Activated CD4-positive, alpha-beta T cell treated with anti-CD3 and anti-CD28 coated beads for 36 hours (primary cell): ENCODE measurements at regions of chr11 and their contacts with region 1.

Region 1: DNA sequence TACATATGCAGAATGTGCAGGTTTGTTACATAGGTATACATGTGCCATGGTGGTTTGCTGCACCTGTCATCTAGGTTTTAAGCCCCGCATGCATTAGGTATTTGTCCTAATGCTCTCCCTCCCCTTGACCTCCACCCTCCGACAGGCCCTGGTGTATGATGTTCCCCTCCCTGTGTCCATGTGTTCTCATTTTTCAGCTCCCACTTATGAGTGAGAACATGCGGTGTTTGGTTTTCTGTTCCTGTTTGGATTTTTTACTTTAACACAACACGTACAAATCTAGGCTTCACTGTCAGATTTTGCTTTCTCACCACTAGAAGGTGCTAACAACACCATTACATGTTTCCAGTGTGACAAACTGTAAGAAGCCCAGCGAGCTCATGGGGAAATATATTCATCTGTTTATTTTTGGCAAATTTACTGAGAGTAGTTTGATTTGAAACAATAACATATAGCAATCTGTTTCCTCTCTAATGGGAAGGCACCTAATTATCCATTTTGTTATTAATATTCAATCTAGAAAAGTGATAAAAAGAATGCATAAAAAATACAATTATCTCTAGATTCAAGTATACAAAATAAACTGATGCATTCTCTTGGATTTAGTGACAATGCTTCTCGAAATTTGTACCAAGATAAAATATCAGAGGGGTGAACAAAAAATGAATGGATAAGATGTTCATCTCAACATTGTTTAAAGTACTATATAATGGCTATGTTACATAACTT is 23.2 kb upstream of the BIRC3 start:
- DNase-seq: no peak
- ATAC-seq: peak; percentile 95
- H3K4me3 Mint-ChIP-seq: peak overlapping the region; percentile 68
- H3K27ac Mint-ChIP-seq: peak overlapping the region; percentile 95
- H3K4me1 Mint-ChIP-seq: peaks cover 27% of the 10 kb centered on the region
- H3K27me3 Mint-ChIP-seq: no peaks in the 10 kb centered on the region

Region 2: GRCh38 chr11:102279641-102280170 is 14.3 kb before region 1 on chr11:
- CTCF ChIA-PET with region 1: interaction called, 19 read pairs
- POLR2A ChIA-PET with region 1: no interaction called
- intact Hi-C with region 1: no loop called
- DNase-seq: peak; percentile 59
- ATAC-seq: peak; percentile 96
- H3K4me3 Mint-ChIP-seq: peak overlapping the region; percentile 27
- H3K27ac Mint-ChIP-seq: peak overlapping the region; percentile 27
- H3K4me1 Mint-ChIP-seq: peaks cover 16% of the 10 kb centered on the region
- H3K27me3 Mint-ChIP-seq: peaks cover 8% of the 10 kb centered on the region

Region 3: DNA sequence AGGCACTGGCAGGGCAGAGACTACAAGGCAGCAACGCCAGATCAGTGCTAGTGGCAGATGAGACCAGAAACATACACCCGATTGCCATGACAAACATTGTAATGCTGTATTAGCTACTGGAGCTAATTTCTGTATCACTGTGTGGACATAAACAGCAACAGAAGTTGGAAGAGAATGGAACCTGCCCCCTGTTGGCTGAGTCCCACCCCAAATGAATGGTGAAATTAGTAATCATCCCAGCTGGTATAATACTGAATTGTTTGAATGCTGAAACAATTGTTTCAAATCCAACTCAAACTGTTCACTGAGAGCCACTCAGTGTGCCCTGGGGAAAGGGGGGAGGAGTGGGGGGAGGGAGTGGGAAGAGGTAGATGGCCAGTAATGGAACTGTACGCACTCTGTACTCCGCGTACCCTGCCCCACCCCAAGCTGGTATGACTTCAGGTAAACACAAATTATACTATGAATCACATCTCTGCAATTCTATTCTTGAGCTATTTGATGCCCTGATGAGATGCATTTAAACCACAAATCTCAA is 12.1 kb after region 1 on chr11:
- CTCF ChIA-PET with region 1: interaction called, 222 read pairs
- POLR2A ChIA-PET with region 1: no interaction called
- intact Hi-C with region 1: no loop called
- DNase-seq: no peak
- ATAC-seq: peak; percentile 48
- H3K4me3 Mint-ChIP-seq: peak overlapping the region; percentile 54
- H3K27ac Mint-ChIP-seq: peak overlapping the region; percentile 86
- H3K4me1 Mint-ChIP-seq: peaks cover 55% of the 10 kb centered on the region
- H3K27me3 Mint-ChIP-seq: no peaks in the 10 kb centered on the region

Region 4: GRCh38 chr11:102317099-102317767 is 23.2 kb after region 1 on chr11 and contains the start of gene BIRC3:
- CTCF ChIA-PET with region 1: interaction called, 222 read pairs
- POLR2A ChIA-PET with region 1: interaction called, 3 read pairs
- intact Hi-C with region 1: loop called (anchors 1 kb)
- DNase-seq: peak; percentile 95
- ATAC-seq: peak; percentile 85
- H3K4me3 Mint-ChIP-seq: peak within 1 kb of the TSS; percentile 96
- H3K27ac Mint-ChIP-seq: peak within 1 kb of the TSS; percentile 99
- H3K4me1 Mint-ChIP-seq: peaks cover 68% of the 10 kb centered on the region
- H3K27me3 Mint-ChIP-seq: no peaks in the 10 kb centered on the region
- total RNA-seq, gene BIRC3: 99.2 to 109 TPM

Region 5: GRCh38 chr11:102332611-102332994 is 38.6 kb after region 1 on chr11:
- CTCF ChIA-PET with region 1: interaction called, 15 read pairs
- POLR2A ChIA-PET with region 1: no interaction called
- intact Hi-C with region 1: no loop called
- DNase-seq: no peak
- ATAC-seq: peak; percentile 63
- H3K4me3 Mint-ChIP-seq: no peak overlapping the region
- H3K27ac Mint-ChIP-seq: peak overlapping the region; percentile 6
- H3K4me1 Mint-ChIP-seq: peaks cover 11% of the 10 kb centered on the region
- H3K27me3 Mint-ChIP-seq: no peaks in the 10 kb centered on the region